SK-N-SH (cell line): ENCODE measurements at regions of chr4 and their contacts with region 1.

Region 1: GRCh38 chr4:17324386-17324830 is 187.5 kb downstream of the QDPR start:
- DNase-seq: peak; percentile 59
- H3K4me3 ChIP-seq: peak overlapping the region in 1 of 2 experiments; percentile 46; a peak in 2 of 4 replicates
- H3K27ac ChIP-seq: peak overlapping the region in 1 of 2 experiments; percentile 51; a peak in 1 of 4 replicates
- H3K4me1 ChIP-seq: peaks cover 0 to 10% of the 10 kb centered on the region in 2 experiments; a peak in 2 of 4 replicates
- H3K27me3 ChIP-seq: no peaks in the 10 kb centered on the region
- CTCF ChIP-seq: peak; percentile 88
- EP300 ChIP-seq: no peak
- RAD21 ChIP-seq: peak; percentile 87

Region 2: DNA sequence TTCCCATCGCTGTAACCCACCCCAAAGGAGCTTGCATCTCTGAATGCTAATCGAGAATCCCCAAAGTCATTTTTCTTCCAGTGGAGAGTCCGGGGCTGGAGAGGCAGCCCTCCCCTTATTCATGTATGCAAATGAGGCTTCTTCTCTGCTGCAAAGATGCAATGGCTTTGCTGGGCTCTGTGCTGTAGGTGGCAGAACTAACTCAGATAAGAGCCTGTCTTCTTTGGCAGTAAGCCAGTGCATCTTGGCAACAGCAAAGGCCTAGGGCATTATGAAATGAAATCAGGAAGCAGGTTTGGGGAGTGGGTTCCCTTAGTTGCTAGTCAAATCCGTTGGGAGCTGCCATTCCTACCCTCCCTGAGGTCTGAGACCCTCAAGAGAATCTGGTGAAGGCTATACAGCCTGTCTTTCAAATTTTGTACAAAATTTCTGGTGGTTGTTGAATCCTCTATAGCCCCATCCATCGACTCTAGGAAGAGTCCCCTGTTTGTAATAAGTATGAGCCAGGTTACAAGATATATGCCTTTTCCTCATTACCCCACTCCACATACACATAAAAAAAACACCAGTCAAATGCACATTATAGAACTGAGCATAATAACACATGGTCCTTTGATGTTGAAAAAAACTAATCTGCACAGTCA is 807.5 kb before region 1 on chr4:
- CTCF ChIA-PET with region 1: interaction called, 39 read pairs
- POLR2A ChIA-PET with region 1: no interaction called
- DNase-seq: peak; percentile 63
- H3K4me3 ChIP-seq: 0 out of 4 replicates have a peak overlapping the region, but pooled peaks of 1 of the 2 experiments have one; percentile 19
- H3K27ac ChIP-seq: no peak overlapping the region
- H3K4me1 ChIP-seq: peaks cover 0 to 17% of the 10 kb centered on the region in 2 experiments; a peak in 3 of 4 replicates
- H3K27me3 ChIP-seq: no peaks in the 10 kb centered on the region
- CTCF ChIP-seq: peak; percentile 57
- EP300 ChIP-seq: peak in 1 of 2 experiments; percentile 63; a peak in 1 of 4 replicates
- RAD21 ChIP-seq: peak; percentile 87

Region 3: GRCh38 chr4:16794816-16795445 is 529.5 kb before region 1 on chr4:
- CTCF ChIA-PET with region 1: interaction called, 29 read pairs
- POLR2A ChIA-PET with region 1: no interaction called
- DNase-seq: peak; percentile 45
- H3K4me3 ChIP-seq: no peak overlapping the region
- H3K27ac ChIP-seq: no peak overlapping the region
- H3K4me1 ChIP-seq: peaks cover 0 to 5% of the 10 kb centered on the region in 2 experiments; a peak in 2 of 4 replicates
- H3K27me3 ChIP-seq: no peaks in the 10 kb centered on the region
- CTCF ChIP-seq: peak; percentile 92
- EP300 ChIP-seq: 0 out of 4 replicates have a peak, but pooled peaks of 1 of the 2 experiments have one; percentile 15
- RAD21 ChIP-seq: peak; percentile 74

Region 4: GRCh38 chr4:17284323-17285175 is 39.9 kb before region 1 on chr4:
- CTCF ChIA-PET with region 1: interaction called, 11 read pairs
- POLR2A ChIA-PET with region 1: no interaction called
- DNase-seq: no peak
- H3K4me3 ChIP-seq: no peak overlapping the region
- H3K27ac ChIP-seq: no peak overlapping the region
- H3K4me1 ChIP-seq: no peaks in the 10 kb centered on the region; a peak in 1 of 4 replicates
- H3K27me3 ChIP-seq: no peaks in the 10 kb centered on the region
- CTCF ChIP-seq: no peak
- EP300 ChIP-seq: no peak
- RAD21 ChIP-seq: no peak

Region 5: DNA sequence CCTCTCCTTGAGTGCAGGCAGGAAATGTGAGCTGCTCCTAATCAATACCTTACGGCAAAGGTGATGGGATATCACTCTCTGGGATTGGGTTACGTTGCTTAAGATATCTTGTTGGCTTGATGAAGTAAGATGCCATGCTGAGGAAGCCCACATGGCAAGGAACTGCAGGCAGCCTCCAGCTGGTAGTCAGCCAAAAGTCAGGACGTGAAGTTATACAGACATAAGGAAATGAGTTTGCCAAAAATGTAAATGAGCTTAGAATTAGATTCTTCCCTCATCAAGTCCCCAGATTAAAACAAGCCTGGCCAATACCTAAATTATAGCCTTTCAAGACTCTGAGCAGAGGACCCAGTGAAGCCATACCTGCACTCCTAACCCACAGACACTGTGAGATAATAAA is 32.5 kb after region 1 on chr4:
- CTCF ChIA-PET with region 1: interaction called, 11 read pairs
- POLR2A ChIA-PET with region 1: no interaction called
- DNase-seq: no peak
- H3K4me3 ChIP-seq: no peak overlapping the region
- H3K27ac ChIP-seq: no peak overlapping the region
- H3K4me1 ChIP-seq: no peaks in the 10 kb centered on the region; a peak in 1 of 4 replicates
- H3K27me3 ChIP-seq: no peaks in the 10 kb centered on the region; the same call in 1 of the 2 replicates
- CTCF ChIP-seq: no peak
- EP300 ChIP-seq: no peak
- RAD21 ChIP-seq: no peak